ENCODE measurements at regions of chr1 and their contacts with region 1.

Region 1: DNA sequence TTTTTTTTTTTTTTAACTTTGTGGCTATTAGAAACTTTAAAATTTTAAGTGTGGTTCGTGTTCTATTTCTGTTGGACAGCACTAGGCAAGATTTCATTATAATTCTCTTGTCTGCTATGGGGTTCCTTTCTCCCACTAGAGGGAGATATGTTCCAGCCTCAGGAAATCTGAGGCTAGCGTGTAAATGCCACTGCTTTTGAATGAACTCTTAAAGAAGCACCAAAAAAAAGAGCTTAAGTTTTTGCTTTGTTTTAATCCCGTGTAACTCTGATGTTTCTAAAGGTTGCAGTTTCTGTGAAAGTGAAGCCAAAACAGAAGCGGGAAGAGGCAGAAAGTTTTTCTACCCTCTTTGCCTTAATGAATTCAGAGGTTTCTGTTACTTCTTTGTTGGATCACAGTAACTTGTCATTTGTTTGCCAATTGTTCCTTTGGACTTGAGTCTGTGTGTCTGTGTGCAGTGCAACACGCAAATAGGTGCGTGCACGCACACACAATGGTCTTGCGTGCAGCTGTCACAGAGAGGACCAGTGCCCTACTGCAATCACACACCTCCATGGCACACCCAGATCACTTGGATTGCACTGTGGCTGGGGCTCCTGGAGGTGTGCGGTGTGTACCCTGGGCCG is 32.3 kb downstream of the HHAT start:
- DNase-seq: no peak
- ATAC-seq: peak; percentile 96
- H3K4me3 ChIP-seq: no peak overlapping the region
- H3K27ac ChIP-seq: no peak overlapping the region
- H3K4me1 ChIP-seq: no peaks in the 10 kb centered on the region
- H3K27me3 ChIP-seq: no peaks in the 10 kb centered on the region
- CTCF ChIP-seq: peak; percentile 44 to 71 (median 57)
- EP300 ChIP-seq: peak in 1 of 2 experiments; percentile 36; a peak in 1 of 4 replicates
- POLR2A ChIP-seq: no peak
- RAD21 ChIP-seq: peak; percentile 64

Region 2: GRCh38 chr1:210200124-210200736 is 160.7 kb before region 1 on chr1:
- CTCF ChIA-PET with region 1: no interaction called
- POLR2A ChIA-PET with region 1: no interaction called
- RAD21 ChIA-PET with region 1: no interaction called
- SMC1A ChIA-PET with region 1: no interaction called
- in situ Hi-C with region 1: no loop called
- intact Hi-C with region 1: no loop called
- DNase-seq: no peak
- ATAC-seq: no peak
- H3K4me3 ChIP-seq: no peak overlapping the region
- H3K27ac ChIP-seq: no peak overlapping the region
- H3K4me1 ChIP-seq: no peaks in the 10 kb centered on the region
- H3K27me3 ChIP-seq: peaks cover 0 to 3% of the 10 kb centered on the region in 2 experiments; a peak in 1 of 4 replicates
- CTCF ChIP-seq: no peak; a peak in 1 of 6 replicates
- EP300 ChIP-seq: no peak
- POLR2A ChIP-seq: no peak
- RAD21 ChIP-seq: no peak

Region 3: GRCh38 chr1:210222340-210223006 is 138.5 kb before region 1 on chr1:
- CTCF ChIA-PET with region 1: no interaction called
- POLR2A ChIA-PET with region 1: no interaction called
- RAD21 ChIA-PET with region 1: no interaction called
- SMC1A ChIA-PET with region 1: no interaction called
- in situ Hi-C with region 1: no loop called
- intact Hi-C with region 1: no loop called
- DNase-seq: no peak
- ATAC-seq: no peak
- H3K4me3 ChIP-seq: no peak overlapping the region
- H3K27ac ChIP-seq: no peak overlapping the region
- H3K4me1 ChIP-seq: no peaks in the 10 kb centered on the region
- H3K27me3 ChIP-seq: no peaks in the 10 kb centered on the region; a peak in 1 of 4 replicates
- CTCF ChIP-seq: no peak
- EP300 ChIP-seq: no peak
- POLR2A ChIP-seq: no peak
- RAD21 ChIP-seq: no peak

Region 4: GRCh38 chr1:210342986-210343780 is 17.8 kb before region 1 on chr1:
- CTCF ChIA-PET with region 1: interaction called, 49 read pairs
- POLR2A ChIA-PET with region 1: interaction called, 15 read pairs
- RAD21 ChIA-PET with region 1: interaction called, 28 read pairs
- SMC1A ChIA-PET with region 1: interaction called, 35 read pairs
- in situ Hi-C with region 1: no loop called
- intact Hi-C with region 1: no loop called
- DNase-seq: peak; percentile 72
- ATAC-seq: peak; percentile 75
- H3K4me3 ChIP-seq: peak overlapping the region; percentile 59
- H3K27ac ChIP-seq: peak overlapping the region; percentile 53
- H3K4me1 ChIP-seq: peaks cover 23% of the 10 kb centered on the region
- H3K27me3 ChIP-seq: no peaks in the 10 kb centered on the region
- CTCF ChIP-seq: no peak
- EP300 ChIP-seq: peak; percentile 70; a peak in 2 of 4 replicates
- POLR2A ChIP-seq: no peak
- RAD21 ChIP-seq: no peak

Region 5: GRCh38 chr1:210384630-210385029 is 23.7 kb after region 1 on chr1:
- CTCF ChIA-PET with region 1: interaction called, 9 read pairs
- POLR2A ChIA-PET with region 1: no interaction called
- RAD21 ChIA-PET with region 1: interaction called, 9 read pairs
- SMC1A ChIA-PET with region 1: interaction called, 11 read pairs
- in situ Hi-C with region 1: no loop called
- intact Hi-C with region 1: no loop called
- DNase-seq: no peak
- ATAC-seq: no peak
- H3K4me3 ChIP-seq: no peak overlapping the region
- H3K27ac ChIP-seq: no peak overlapping the region
- H3K4me1 ChIP-seq: no peaks in the 10 kb centered on the region
- H3K27me3 ChIP-seq: no peaks in the 10 kb centered on the region
- CTCF ChIP-seq: no peak
- EP300 ChIP-seq: no peak
- POLR2A ChIP-seq: no peak
- RAD21 ChIP-seq: no peak

Region 6: GRCh38 chr1:210394281-210394821 is 33.4 kb after region 1 on chr1:
- CTCF ChIA-PET with region 1: interaction called, 290 read pairs
- POLR2A ChIA-PET with region 1: interaction called, 13 read pairs
- RAD21 ChIA-PET with region 1: interaction called, 181 read pairs
- SMC1A ChIA-PET with region 1: interaction called, 286 read pairs
- in situ Hi-C with region 1: no loop called
- intact Hi-C with region 1: no loop called
- DNase-seq: peak; percentile 80
- ATAC-seq: peak; percentile 80
- H3K4me3 ChIP-seq: no peak overlapping the region
- H3K27ac ChIP-seq: no peak overlapping the region
- H3K4me1 ChIP-seq: no peaks in the 10 kb centered on the region
- H3K27me3 ChIP-seq: no peaks in the 10 kb centered on the region
- CTCF ChIP-seq: no peak
- EP300 ChIP-seq: peak; percentile 85 to 87; a peak in 3 of 4 replicates
- POLR2A ChIP-seq: no peak
- RAD21 ChIP-seq: no peak